H1 (cell line): ENCODE measurements at regions of chr12 and their contacts with region 1.

Region 1: GRCh38 chr12:52879394-52880351 is 25.2 kb downstream of the KRT8 start:
- DNase-seq: peak in 1 of 2 experiments; percentile 86
- H3K4me3 ChIP-seq: peak overlapping the region in 3 of 4 experiments; percentile 29 to 59 (median 42); a peak in 6 of 8 replicates
- H3K27ac ChIP-seq: no peak overlapping the region
- H3K4me1 ChIP-seq: peaks cover 0 to 8% (median 4%) of the 10 kb centered on the region in 4 experiments; a peak in 4 of 7 replicates
- H3K27me3 ChIP-seq: peaks cover 0 to 10% (median 5%) of the 10 kb centered on the region in 4 experiments; a peak in 3 of 7 replicates
- CTCF ChIP-seq: peak; percentile 80 to 98 (median 98)
- EP300 ChIP-seq: no peak
- POLR2A ChIP-seq: no peak
- RAD21 ChIP-seq: peak; percentile 96

Region 2: DNA sequence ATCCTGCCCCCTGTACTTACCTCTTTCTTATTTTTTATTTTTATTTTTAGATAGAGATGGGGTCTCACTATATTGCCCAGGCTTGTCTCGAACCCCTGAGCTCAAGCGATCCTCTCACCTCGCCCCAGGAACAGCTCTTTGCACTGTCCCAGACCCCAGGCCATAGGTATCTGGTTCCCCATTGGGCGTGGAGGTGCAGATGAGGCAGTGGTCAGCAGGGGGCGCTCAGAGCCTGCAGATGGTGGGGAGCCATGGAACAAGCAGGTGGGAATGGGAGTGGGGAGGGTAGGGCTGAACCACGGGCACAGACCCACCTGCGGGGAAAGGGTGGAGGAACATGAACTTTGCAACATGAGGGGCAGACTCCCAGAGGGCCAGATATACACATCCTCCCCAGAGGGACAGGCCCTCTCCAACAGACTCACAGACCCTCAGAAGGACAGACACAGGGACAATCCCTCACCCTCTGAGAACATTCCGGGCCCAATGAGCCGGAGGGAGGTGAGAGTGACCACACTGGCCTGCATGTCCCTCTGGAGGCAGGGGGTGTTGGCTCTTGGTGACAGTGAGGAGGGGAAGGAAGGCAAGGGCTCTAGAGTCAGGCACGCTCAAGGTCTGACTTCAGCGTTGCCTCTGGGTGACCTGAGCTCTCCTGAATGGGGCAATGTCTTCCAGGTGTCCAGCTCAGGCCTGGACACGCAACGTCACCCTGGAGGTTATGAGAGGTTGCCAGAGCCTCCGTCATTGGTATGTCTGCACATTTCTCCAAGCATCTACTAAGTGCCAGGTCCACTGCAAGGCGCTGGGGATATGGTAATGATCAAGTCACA is 722.7 kb before region 1 on chr12:
- CTCF ChIA-PET with region 1: interaction called, 10 read pairs
- POLR2A ChIA-PET with region 1: no interaction called
- DNase-seq: peak in 1 of 2 experiments; percentile 98
- H3K4me3 ChIP-seq: no peak overlapping the region
- H3K27ac ChIP-seq: no peak overlapping the region
- H3K4me1 ChIP-seq: 0 out of 7 replicates have a peak, but pooled peaks cover 0 to 2% (median under 1%) of the 10 kb centered on the region in 4 experiments
- H3K27me3 ChIP-seq: peaks cover 0 to 4% (median 2%) of the 10 kb centered on the region in 4 experiments; a peak in 2 of 7 replicates
- CTCF ChIP-seq: peak in 2 of 3 experiments; percentile 98; a peak in 3 of 4 replicates
- EP300 ChIP-seq: no peak
- POLR2A ChIP-seq: no peak
- RAD21 ChIP-seq: peak; percentile 100

Region 3: DNA sequence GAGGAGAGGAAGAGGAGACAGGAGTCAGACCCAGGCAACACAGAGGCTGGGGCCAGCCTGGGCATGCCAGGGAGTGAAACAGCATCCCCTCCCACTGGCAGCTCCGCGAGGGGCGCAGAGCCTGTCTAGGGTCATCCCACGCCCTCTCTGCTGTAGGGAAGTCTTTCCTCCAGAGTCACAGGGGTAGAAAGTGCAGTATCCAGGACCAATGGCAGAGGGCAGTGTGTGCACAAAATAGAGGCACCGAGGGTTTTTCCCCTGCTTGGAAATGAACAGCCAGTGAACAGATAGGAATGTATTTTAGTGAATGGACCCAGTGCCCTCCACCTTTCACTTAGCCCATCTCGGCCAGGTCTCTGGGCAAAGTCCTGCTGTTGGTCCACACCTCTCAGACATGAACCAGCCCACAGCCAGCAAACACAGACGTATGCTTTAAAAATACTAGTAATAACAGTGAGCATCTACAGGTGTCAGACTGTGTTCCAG is 296.7 kb before region 1 on chr12:
- CTCF ChIA-PET with region 1: interaction called, 502 read pairs
- POLR2A ChIA-PET with region 1: no interaction called
- DNase-seq: peak; percentile 21 to 78
- H3K4me3 ChIP-seq: no peak overlapping the region
- H3K27ac ChIP-seq: no peak overlapping the region
- H3K4me1 ChIP-seq: no peaks in the 10 kb centered on the region
- H3K27me3 ChIP-seq: no peaks in the 10 kb centered on the region; a peak in 1 of 7 replicates
- CTCF ChIP-seq: peak; percentile 58 to 90 (median 86)
- EP300 ChIP-seq: no peak
- POLR2A ChIP-seq: no peak
- RAD21 ChIP-seq: peak; percentile 90 to 92

Region 4: DNA sequence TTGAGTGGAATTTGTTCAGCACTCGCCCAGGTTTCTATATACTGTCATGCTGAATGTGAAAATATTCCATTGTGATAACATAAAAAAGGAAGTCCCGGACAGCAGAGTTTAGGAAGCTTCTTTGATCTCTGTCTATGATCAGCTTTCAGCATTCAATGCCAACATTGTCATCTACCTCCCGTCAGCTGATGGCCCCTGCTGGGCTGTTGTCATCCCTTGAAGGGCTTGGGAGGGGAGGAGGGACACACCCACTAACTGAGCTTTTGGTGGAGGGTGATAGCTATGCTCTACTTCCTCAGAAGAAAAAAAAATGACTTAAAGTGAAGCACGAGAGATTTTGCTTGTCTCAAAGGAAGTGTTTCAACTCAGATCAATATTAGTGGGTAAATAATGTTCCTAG is 171.7 kb before region 1 on chr12:
- CTCF ChIA-PET with region 1: interaction called, 19 read pairs
- POLR2A ChIA-PET with region 1: no interaction called
- DNase-seq: no peak
- H3K4me3 ChIP-seq: no peak overlapping the region
- H3K27ac ChIP-seq: no peak overlapping the region
- H3K4me1 ChIP-seq: no peaks in the 10 kb centered on the region
- H3K27me3 ChIP-seq: peaks cover 0 to 3% (median 1%) of the 10 kb centered on the region in 4 experiments; a peak in 4 of 7 replicates
- CTCF ChIP-seq: no peak
- EP300 ChIP-seq: no peak
- POLR2A ChIP-seq: no peak
- RAD21 ChIP-seq: no peak

Region 5: DNA sequence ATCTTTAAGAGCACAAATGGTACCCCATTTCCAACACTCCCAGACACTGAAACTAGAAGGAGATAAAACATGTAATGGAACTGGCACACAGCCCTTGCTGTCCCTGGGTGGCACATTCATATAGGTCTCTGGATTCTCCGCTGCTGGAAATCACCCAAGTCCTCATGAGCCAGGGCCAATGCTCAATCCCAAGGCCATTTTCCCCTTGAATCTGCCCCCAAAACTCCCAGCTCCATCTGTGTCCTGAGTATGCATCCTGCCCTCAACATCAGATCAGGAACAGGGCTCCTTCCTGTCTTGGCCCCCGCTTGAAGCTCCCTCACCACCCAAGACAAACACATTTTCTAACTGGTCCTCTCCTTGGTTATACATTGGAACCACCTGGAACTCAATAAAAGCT is 127.2 kb before region 1 on chr12:
- CTCF ChIA-PET with region 1: no interaction called
- POLR2A ChIA-PET with region 1: no interaction called
- DNase-seq: no peak
- H3K4me3 ChIP-seq: no peak overlapping the region
- H3K27ac ChIP-seq: no peak overlapping the region
- H3K4me1 ChIP-seq: no peaks in the 10 kb centered on the region
- H3K27me3 ChIP-seq: peaks cover 0 to 3% (median 0%) of the 10 kb centered on the region in 4 experiments; a peak in 1 of 7 replicates
- CTCF ChIP-seq: no peak
- EP300 ChIP-seq: no peak
- POLR2A ChIP-seq: no peak
- RAD21 ChIP-seq: no peak

Region 6: GRCh38 chr12:52903285-52903854 is 23.7 kb after region 1 on chr12:
- CTCF ChIA-PET with region 1: interaction called, 351 read pairs
- POLR2A ChIA-PET with region 1: interaction called, 21 read pairs
- DNase-seq: peak; percentile 61 to 91
- H3K4me3 ChIP-seq: peak overlapping the region; percentile 59 to 100 (median 76)
- H3K27ac ChIP-seq: no peak overlapping the region
- H3K4me1 ChIP-seq: peaks cover 14 to 21% (median 15%) of the 10 kb centered on the region in 4 experiments
- H3K27me3 ChIP-seq: no peaks in the 10 kb centered on the region; a peak in 1 of 7 replicates
- CTCF ChIP-seq: no peak
- EP300 ChIP-seq: peak in 1 of 2 experiments; percentile 53; a peak in 1 of 3 replicates
- POLR2A ChIP-seq: no peak; a peak in 1 of 3 replicates
- RAD21 ChIP-seq: peak in 1 of 2 experiments; percentile 5; a peak in 1 of 4 replicates

Region 7: DNA sequence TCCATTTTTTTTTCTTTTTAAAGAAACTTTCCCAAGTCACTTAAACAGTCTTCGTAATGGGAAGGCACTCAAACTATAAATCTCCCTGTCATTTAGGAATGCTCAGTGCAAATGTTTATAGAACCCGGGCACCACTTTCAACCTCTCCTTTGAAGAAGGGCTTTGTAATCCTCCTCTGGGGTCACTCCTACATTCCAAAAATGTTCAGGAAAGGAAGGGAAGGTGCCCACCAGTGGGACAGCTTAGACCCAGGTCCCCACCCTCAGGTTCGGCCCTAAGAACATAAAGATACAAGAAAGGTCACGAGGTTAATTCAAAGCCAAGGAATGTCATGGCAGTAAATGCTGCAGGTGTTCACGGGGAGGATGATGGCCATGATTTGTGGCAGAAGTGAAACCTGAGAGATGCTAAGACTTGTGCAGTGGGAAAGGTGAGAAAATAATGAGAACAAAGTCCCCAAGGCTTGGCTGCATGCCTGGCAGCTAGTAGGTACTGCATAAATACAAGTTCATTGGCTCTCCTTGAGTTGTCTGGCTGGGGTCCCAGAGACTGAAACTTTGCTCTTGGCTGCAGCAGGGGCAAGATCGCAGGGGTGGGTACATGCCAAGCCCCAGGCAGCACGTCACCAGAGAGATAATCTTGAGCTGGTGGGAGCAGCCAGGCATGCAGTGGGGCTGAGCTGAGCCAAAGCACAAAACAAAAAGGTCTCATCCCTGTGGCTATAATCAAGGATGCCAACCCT is 90.3 kb after region 1 on chr12:
- CTCF ChIA-PET with region 1: interaction called, 63 read pairs
- POLR2A ChIA-PET with region 1: interaction called, 3 read pairs
- DNase-seq: no peak
- H3K4me3 ChIP-seq: no peak overlapping the region
- H3K27ac ChIP-seq: no peak overlapping the region
- H3K4me1 ChIP-seq: peaks cover 4 to 10% (median 7%) of the 10 kb centered on the region in 4 experiments
- H3K27me3 ChIP-seq: peaks cover 0 to 9% (median 5%) of the 10 kb centered on the region in 4 experiments; a peak in 3 of 7 replicates
- CTCF ChIP-seq: no peak
- EP300 ChIP-seq: no peak
- POLR2A ChIP-seq: no peak
- RAD21 ChIP-seq: no peak